Activated naive CD4-positive, alpha-beta T cell treated with anti-CD3 and anti-CD28 coated beads for 36 hours (primary cell): ENCODE measurements at regions of chr11 and their contacts with region 1.

Region 1: DNA sequence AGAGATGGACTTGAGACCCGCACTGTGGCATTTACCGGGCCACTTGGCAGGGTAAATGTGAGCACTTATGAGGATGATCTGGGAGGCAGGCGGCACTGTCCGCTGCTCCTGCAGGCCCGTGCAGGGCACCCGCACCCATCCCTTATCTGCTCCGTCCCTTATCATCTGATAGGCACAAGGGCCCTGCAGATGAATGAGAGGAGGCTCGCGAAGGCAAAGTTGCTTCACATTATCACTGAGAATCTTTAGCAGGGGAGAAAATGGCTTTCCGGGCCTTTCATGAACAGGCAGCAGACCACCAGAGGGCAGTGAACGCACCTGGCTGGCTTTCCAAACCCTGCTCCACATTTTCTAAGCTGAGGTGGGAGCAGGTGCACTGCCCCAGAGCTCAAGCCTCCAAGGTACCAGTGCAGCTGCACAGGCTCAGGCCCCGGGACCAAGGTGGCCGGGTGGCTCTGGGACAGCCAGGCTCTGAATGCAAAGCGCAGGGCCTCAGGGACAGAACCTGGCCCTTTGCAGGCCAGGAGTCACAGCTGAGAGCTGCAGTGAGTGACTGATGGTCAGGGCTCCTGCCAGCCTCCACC is 165.6 kb downstream of the SHANK2 start:
- DNase-seq: peak; percentile 27
- H3K4me3 Mint-ChIP-seq: no peak overlapping the region
- H3K27ac Mint-ChIP-seq: no peak overlapping the region
- H3K4me1 Mint-ChIP-seq: no peaks in the 10 kb centered on the region
- H3K27me3 Mint-ChIP-seq: peaks cover 4% of the 10 kb centered on the region

Region 2: GRCh38 chr11:71420455-71421241 is 333.9 kb after region 1 on chr11:
- CTCF ChIA-PET with region 1: no interaction called
- intact Hi-C with region 1: loop called (anchors 5 kb)
- DNase-seq: peak; percentile 26
- H3K4me3 Mint-ChIP-seq: no peak overlapping the region
- H3K27ac Mint-ChIP-seq: no peak overlapping the region
- H3K4me1 Mint-ChIP-seq: peaks cover 1% of the 10 kb centered on the region
- H3K27me3 Mint-ChIP-seq: no peaks in the 10 kb centered on the region